Mammary epithelial cell (primary cell): ENCODE measurements at regions of chr7 and their contacts with region 1.

Region 1: GRCh38 chr7:83936056-83936708 is 258.4 kb downstream of the SEMA3A start:
- DNase-seq: peak; percentile 57
- H3K4me3 ChIP-seq: no peak overlapping the region
- H3K27ac ChIP-seq: no peak overlapping the region
- H3K4me1 ChIP-seq: no peaks in the 10 kb centered on the region
- H3K27me3 ChIP-seq: no peaks in the 10 kb centered on the region
- CTCF ChIP-seq: peak; percentile 90 to 96

Region 2: DNA sequence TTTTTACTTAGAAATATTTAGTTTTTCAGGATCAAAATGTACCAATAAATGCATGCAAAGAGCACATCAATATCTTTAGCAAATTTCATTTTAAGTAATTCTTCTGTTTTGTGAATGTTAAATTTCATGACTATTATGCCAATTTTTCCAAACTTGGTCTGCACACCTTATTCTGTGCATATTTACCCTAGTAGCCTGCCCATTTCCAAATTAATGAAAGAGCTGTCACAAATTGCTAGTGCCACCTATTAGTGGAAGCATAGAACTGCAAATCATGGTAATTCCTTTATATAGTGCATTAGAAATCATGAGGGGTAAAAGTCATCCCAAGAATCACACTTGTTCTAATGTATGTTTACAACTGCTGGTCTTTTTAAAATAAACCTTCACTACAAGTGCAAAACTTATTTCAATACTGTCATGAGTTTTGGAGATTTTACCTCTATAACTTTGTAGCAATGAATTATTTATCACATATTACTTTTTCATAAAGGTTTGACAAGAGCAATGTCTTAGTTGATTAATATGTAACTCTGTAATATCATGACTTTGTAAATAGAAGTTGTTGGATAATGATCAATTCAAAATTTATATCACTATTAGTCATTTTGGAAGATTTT is 252.7 kb after region 1 on chr7:
- CTCF ChIA-PET with region 1: no interaction called
- dilution Hi-C with region 1: no loop called
- in situ Hi-C with region 1: no loop called
- intact Hi-C with region 1: loop called (anchors 5 kb)
- DNase-seq: no peak
- H3K4me3 ChIP-seq: no peak overlapping the region
- H3K27ac ChIP-seq: peak overlapping the region; percentile 94
- H3K4me1 ChIP-seq: peaks cover 27% of the 10 kb centered on the region
- H3K27me3 ChIP-seq: no peaks in the 10 kb centered on the region
- CTCF ChIP-seq: peak; percentile 46 to 69